CD4-positive, alpha-beta T cell (primary cell): ENCODE measurements at regions of chr10 and their contacts with region 1.

Region 1: GRCh38 chr10:14837757-14838581 is at the starts of genes CDNF, HSPA14 and MSANTD7:
- DNase-seq: peak; percentile 97 to 100 (median 99)
- ATAC-seq: peak; percentile 93
- H3K4me3 ChIP-seq: peak within 1 kb of the TSS; percentile 97
- H3K4me3 Mint-ChIP-seq: peak within 1 kb of the TSS; percentile 99
- H3K27ac ChIP-seq: peak within 1 kb of the TSS; percentile 84 to 88
- H3K27ac Mint-ChIP-seq: peak within 1 kb of the TSS; percentile 90
- H3K4me1 ChIP-seq: peaks cover 21% of the 10 kb centered on the region
- H3K4me1 Mint-ChIP-seq: peaks cover 32% of the 10 kb centered on the region
- H3K27me3 ChIP-seq: no peaks in the 10 kb centered on the region
- H3K27me3 Mint-ChIP-seq: no peaks in the 10 kb centered on the region
- CTCF ChIP-seq: no peak
- total RNA-seq, gene CDNF: 3.2 to 3.7 TPM
- total RNA-seq, gene HSPA14: 29.1 to 33.4 TPM
- total RNA-seq, gene MSANTD7: 26.2 to 26.9 TPM

Region 2: DNA sequence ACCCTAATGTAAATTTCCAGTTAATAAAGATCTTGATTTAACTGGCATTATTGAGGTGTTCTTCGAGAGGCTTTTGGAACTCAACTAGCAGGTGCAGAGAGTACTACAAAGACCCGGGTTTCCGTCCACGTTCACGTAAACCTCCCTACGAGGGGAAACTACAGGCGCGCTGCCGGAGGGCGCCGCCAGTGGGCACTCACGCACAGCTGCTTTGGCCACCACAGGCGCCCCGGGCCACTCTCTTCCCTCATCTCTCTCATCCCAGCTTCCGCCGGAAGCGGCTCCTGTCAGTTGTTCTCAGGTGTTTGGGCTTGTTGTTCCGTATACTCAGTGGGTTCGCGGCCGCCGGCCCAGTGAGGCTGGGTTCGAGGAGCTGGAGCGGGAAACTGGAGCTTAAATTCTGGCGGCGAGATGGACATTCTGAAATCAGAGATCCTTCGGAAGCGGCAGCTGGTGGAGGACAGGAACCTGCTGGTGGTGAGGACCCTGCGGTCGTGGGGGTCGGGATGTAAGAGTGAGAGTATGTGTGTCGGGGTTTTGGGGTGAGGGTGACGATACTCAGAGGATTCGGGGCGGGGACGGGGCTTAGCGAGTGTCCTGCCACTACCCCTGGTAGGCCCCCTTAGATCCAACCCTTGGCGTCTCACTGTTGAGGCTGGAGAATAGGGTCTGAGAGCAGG is 1251.2 kb before region 1 on chr10 and contains the start of gene PRPF18:
- CTCF ChIA-PET with region 1: no interaction called
- POLR2A ChIA-PET with region 1: interaction called, 7 read pairs
- intact Hi-C with region 1: loop called in 1 of 2 experiments (anchors 10 kb)
- DNase-seq: peak; percentile 92 to 96 (median 95)
- ATAC-seq: peak; percentile 99
- H3K4me3 ChIP-seq: peak within 1 kb of the TSS; percentile 71
- H3K4me3 Mint-ChIP-seq: peak within 1 kb of the TSS; percentile 99
- H3K27ac ChIP-seq: peak within 1 kb of the TSS in 1 of 2 donors; percentile 26
- H3K27ac Mint-ChIP-seq: peak within 1 kb of the TSS; percentile 85
- H3K4me1 ChIP-seq: peaks cover 13% of the 10 kb centered on the region
- H3K4me1 Mint-ChIP-seq: peaks cover 47% of the 10 kb centered on the region
- H3K27me3 ChIP-seq: peaks cover 12 to 15% of the 10 kb centered on the region in 2 experiments
- H3K27me3 Mint-ChIP-seq: peaks cover 32% of the 10 kb centered on the region
- CTCF ChIP-seq: peak; percentile 94
- total RNA-seq, gene PRPF18: 20.7 to 22.7 TPM

Region 3: GRCh38 chr10:14556285-14556956 is 281.5 kb before region 1 on chr10:
- CTCF ChIA-PET with region 1: interaction called, 3 read pairs
- POLR2A ChIA-PET with region 1: interaction called, 27 read pairs
- intact Hi-C with region 1: no loop called
- DNase-seq: peak in 3 of 14 experiments; percentile 68 to 77 (median 71)
- ATAC-seq: peak; percentile 32
- H3K4me3 ChIP-seq: no peak overlapping the region
- H3K4me3 Mint-ChIP-seq: peak overlapping the region; percentile 45
- H3K27ac ChIP-seq: peak overlapping the region; percentile 38 to 53
- H3K27ac Mint-ChIP-seq: peak overlapping the region; percentile 98
- H3K4me1 ChIP-seq: peaks cover 86% of the 10 kb centered on the region
- H3K4me1 Mint-ChIP-seq: peaks cover 98% of the 10 kb centered on the region
- H3K27me3 ChIP-seq: no peaks in the 10 kb centered on the region
- H3K27me3 Mint-ChIP-seq: no peaks in the 10 kb centered on the region
- CTCF ChIP-seq: no peak

Region 4: DNA sequence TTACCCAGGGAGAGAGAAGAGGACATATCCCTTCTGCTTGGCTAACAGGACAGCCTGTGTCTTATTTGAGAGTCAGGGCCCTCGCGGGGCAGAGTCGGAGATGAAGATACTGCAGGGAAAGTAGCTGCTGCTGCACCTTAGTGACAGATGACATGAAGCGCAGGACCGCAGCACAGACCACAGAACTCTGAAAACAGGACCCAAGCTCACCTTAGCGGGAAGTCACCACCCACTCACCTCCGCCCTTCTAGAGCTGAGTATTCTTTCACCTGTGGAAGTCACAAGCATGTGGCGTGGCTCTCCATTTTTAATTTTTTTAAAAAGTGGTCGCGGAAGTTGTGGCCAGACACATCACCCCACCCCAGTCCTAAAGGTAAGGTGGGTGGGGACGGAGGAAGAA is 254.7 kb before region 1 on chr10:
- CTCF ChIA-PET with region 1: no interaction called
- POLR2A ChIA-PET with region 1: interaction called, 17 read pairs
- intact Hi-C with region 1: no loop called
- DNase-seq: peak; percentile 70 to 95 (median 78)
- ATAC-seq: peak; percentile 77
- H3K4me3 ChIP-seq: no peak overlapping the region
- H3K4me3 Mint-ChIP-seq: peak overlapping the region; percentile 78
- H3K27ac ChIP-seq: peak overlapping the region; percentile 90 to 95
- H3K27ac Mint-ChIP-seq: peak overlapping the region; percentile 97
- H3K4me1 ChIP-seq: peaks cover 93% of the 10 kb centered on the region
- H3K4me1 Mint-ChIP-seq: peaks cover 98% of the 10 kb centered on the region
- H3K27me3 ChIP-seq: no peaks in the 10 kb centered on the region
- H3K27me3 Mint-ChIP-seq: no peaks in the 10 kb centered on the region
- CTCF ChIP-seq: no peak

Region 5: DNA sequence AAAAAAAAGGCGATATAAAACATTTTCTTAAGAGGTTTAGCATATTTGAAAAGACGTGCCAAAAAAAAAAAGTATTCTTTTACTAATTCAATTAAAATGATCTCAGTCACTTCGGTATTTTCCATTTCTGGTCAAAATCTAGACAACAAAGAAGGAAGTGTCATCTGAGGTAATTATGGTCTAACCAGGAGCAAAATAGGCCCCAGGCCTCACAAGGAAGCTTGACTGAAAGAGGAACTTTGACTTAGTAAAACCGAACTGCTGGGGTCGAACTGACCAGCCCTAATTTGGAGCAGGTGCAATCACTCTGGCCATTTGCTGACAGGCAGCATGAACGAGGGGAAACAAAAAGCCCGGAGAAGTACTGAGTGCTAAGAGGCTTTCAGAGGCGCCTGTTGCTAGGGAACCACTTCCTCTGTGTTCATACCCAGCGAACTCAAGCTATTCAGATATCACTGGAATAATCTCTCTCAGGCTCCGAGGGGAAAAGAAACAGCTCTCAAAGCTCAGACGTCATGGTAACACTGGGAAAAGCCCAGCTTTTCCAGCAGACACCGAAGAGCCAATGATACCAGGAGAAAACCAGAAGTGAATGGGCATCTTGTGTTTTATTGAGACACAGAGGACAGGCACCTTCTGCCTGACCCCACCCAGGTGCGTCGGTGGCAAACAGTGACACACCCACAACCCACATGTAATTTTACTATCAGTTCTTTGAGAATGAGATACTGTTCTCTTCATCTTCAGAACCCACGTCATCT is 189.8 kb before region 1 on chr10:
- CTCF ChIA-PET with region 1: no interaction called
- POLR2A ChIA-PET with region 1: interaction called, 9 read pairs
- intact Hi-C with region 1: loop called in 1 of 2 experiments (anchors 5 kb)
- DNase-seq: peak; percentile 44 to 92 (median 65)
- ATAC-seq: peak; percentile 85
- H3K4me3 ChIP-seq: peak overlapping the region; percentile 55
- H3K4me3 Mint-ChIP-seq: peak overlapping the region; percentile 84
- H3K27ac ChIP-seq: peak overlapping the region; percentile 91 to 95
- H3K27ac Mint-ChIP-seq: peak overlapping the region; percentile 99
- H3K4me1 ChIP-seq: peaks cover 43% of the 10 kb centered on the region
- H3K4me1 Mint-ChIP-seq: peaks cover 69% of the 10 kb centered on the region
- H3K27me3 ChIP-seq: no peaks in the 10 kb centered on the region
- H3K27me3 Mint-ChIP-seq: no peaks in the 10 kb centered on the region
- CTCF ChIP-seq: no peak

Region 6: DNA sequence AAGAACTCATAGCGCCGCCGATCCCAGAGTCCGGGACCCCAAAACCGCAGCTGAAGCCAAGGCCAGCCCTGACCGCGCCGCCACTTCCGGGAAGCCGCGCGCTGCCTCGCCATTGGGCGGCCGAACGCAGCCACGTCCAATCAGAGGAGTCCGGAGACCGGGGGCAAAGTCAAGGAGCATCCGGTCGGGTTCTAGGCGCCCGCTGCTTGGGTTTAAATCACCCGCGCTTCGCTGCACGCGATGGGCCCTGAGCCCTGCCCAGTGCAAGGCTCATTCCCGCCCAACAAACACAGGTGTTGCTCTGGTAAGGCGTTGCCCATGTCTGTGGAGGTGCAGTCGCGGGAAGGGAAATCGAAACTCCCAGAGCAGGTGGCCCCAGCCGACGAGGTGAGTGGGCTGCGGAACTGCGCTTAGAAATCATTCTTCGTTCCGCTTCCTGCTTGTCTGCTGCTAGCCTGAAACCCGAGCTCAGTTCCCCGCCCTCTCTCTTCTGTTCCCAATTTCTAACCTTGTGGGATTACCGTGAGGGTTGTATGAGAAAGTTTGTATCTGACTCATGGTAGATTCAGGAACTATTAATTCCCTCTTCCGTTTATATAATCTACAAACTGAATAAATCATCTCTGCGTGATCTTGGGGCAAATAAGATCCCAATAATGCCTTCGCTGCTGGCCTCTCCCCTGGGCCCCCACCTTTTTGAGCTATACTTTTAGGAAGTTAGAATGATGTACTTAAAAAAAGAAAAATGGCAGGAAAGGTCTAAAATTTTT is 116.2 kb after region 1 on chr10 and contains the start of gene DCLRE1C:
- CTCF ChIA-PET with region 1: interaction called, 3 read pairs
- POLR2A ChIA-PET with region 1: interaction called, 13 read pairs
- intact Hi-C with region 1: loop called (anchors 2 to 5 kb)
- DNase-seq: peak; percentile 71 to 93 (median 80)
- ATAC-seq: peak; percentile 86
- H3K4me3 ChIP-seq: peak within 1 kb of the TSS; percentile 86
- H3K4me3 Mint-ChIP-seq: peak within 1 kb of the TSS; percentile 91
- H3K27ac ChIP-seq: peak within 1 kb of the TSS; percentile 82 to 91
- H3K27ac Mint-ChIP-seq: peak within 1 kb of the TSS; percentile 90
- H3K4me1 ChIP-seq: peaks cover 61% of the 10 kb centered on the region
- H3K4me1 Mint-ChIP-seq: peaks cover 66% of the 10 kb centered on the region
- H3K27me3 ChIP-seq: no peaks in the 10 kb centered on the region
- H3K27me3 Mint-ChIP-seq: no peaks in the 10 kb centered on the region
- CTCF ChIP-seq: no peak
- total RNA-seq, gene DCLRE1C: 11.0 to 15.4 TPM